Activated naive CD4-positive, alpha-beta T cell treated with anti-CD3 and anti-CD28 coated beads, Interleukin-2, amount 10 ng/mL, durations not matched to agents 7 days and 5 days (primary cell): ENCODE measurements at regions of chr5 and their contacts with region 1.

Region 1: DNA sequence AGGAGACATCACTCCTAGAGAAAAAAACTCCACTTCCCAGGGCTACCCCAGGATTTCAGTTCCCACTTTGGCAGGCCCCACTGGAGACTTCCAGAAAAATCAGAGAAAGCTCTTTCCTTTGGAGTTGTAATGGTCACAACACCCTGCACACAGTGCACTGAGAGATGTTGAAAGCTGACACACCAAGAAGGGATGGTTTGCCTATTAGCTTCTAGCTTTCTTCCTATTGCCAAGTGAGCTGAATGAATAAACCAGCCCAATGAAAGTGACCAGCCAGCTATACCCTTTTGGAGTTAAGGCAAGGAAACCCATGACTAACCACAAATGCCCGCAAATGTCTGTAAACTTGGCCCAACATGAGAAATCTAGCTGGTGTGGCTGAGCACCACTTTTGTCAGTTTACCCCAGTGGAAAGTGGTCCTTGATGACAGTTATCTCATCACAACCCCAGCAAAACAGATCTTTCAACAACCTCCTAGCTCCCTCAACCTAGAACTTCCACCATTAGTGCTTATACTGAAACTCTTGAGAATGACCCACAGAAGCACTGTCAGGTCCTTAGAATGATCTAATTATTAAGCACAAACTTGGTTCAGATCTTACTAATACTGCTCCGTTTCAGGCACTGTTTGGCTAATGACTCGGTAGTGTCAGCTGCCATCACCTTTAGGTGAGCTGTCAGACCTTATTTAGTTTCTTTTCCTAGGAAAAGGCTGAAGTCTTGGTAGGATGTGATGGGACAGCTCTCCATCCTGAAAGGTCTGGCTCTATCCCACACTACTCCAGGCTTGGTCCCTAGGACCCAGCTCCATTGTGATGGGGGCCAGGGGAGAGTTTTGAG is 11.2 kb downstream of the IRF1 start:
- DNase-seq: peak; percentile 23
- H3K4me3 Mint-ChIP-seq: no peak overlapping the region
- H3K27ac Mint-ChIP-seq: peak overlapping the region; percentile 78
- H3K4me1 Mint-ChIP-seq: peaks cover 83% of the 10 kb centered on the region
- H3K27me3 Mint-ChIP-seq: peaks cover 4% of the 10 kb centered on the region

Region 2: DNA sequence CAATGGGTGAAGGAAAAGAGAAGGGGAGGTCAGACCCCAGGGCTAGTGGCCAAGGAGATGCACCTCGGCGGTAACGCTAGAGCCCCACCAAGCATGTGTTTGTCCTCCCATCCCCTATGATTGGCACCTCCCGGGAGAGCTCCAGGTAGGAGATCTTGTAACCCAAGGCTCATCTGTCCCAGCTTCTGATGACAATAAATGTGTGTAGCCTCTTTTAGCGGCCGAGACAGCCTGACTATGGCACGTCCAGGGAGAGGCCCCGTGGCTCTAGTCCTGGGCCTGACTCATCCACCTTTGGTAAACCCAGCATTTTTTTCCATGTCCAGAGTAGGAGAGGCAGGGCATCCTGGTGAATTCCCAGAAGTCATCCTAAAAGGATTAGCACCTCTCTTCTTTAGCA is 28.0 kb before region 1 on chr5:
- CTCF ChIA-PET with region 1: no interaction called
- DNase-seq: peak; percentile 1
- H3K4me3 Mint-ChIP-seq: no peak overlapping the region
- H3K27ac Mint-ChIP-seq: no peak overlapping the region
- H3K4me1 Mint-ChIP-seq: peaks cover 66% of the 10 kb centered on the region
- H3K27me3 Mint-ChIP-seq: no peaks in the 10 kb centered on the region

Region 3: DNA sequence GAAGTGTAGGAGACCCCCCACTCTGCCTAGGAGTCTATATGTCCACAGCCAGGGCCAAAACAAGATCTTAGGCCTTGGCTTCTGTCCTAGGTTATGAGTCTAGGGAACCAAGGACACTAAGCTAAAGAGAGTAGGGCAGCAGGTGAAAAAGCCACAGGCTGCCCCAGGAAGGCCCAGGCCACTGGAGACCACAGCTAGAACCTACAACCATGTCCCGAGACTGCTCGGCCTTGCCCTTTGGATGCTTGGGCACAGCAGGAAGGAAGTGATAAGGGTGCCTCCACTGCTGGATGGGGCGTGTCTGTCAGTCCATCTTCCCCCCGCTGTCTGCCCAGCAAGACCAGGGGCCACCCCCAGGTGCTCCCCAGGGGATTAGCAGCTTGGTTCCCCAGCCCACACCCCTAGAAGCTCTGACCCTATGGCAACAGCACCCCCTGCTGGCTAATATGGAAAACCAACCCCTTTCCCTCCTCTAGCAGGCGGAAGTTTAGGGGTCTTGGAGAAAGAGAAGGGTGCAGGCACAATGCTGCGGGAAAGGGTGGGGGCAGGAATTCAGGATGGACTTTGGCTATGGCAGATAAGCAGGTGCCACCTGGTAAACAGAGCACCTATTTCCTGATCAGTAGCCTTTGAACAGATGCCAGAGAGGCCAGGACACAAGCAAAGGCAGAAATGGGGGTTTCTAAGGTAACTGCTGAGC is 21.8 kb after region 1 on chr5:
- CTCF ChIA-PET with region 1: interaction called, 15 read pairs
- DNase-seq: peak; percentile 83
- H3K4me3 Mint-ChIP-seq: no peak overlapping the region
- H3K27ac Mint-ChIP-seq: peak overlapping the region; percentile 12
- H3K4me1 Mint-ChIP-seq: peaks cover 39% of the 10 kb centered on the region
- H3K27me3 Mint-ChIP-seq: peaks cover 24% of the 10 kb centered on the region